ENCODE measurements at regions of chr19 and their contacts with region 1.

Region 1: GRCh38 chr19:55467236-55468053 is 2.9 kb upstream of the C19orf85 start:
- DNase-seq: peak; percentile 73
- H3K4me3 Mint-ChIP-seq: no peak overlapping the region
- H3K27ac Mint-ChIP-seq: no peak overlapping the region
- H3K4me1 Mint-ChIP-seq: peaks cover 3% of the 10 kb centered on the region
- H3K27me3 Mint-ChIP-seq: no peaks in the 10 kb centered on the region

Region 2: GRCh38 chr19:55141696-55142095 is 325.7 kb before region 1 on chr19:
- CTCF ChIA-PET with region 1: interaction called, 11 read pairs
- POLR2A ChIA-PET with region 1: no interaction called
- intact Hi-C with region 1: no loop called
- DNase-seq: no peak
- H3K4me3 Mint-ChIP-seq: no peak overlapping the region
- H3K27ac Mint-ChIP-seq: no peak overlapping the region
- H3K4me1 Mint-ChIP-seq: peaks cover 3% of the 10 kb centered on the region
- H3K27me3 Mint-ChIP-seq: peaks cover 45% of the 10 kb centered on the region

Region 3: GRCh38 chr19:55452749-55453346 is 14.6 kb before region 1 on chr19:
- CTCF ChIA-PET with region 1: interaction called, 12 read pairs
- POLR2A ChIA-PET with region 1: no interaction called
- intact Hi-C with region 1: no loop called
- DNase-seq: peak; percentile 52
- H3K4me3 Mint-ChIP-seq: no peak overlapping the region
- H3K27ac Mint-ChIP-seq: no peak overlapping the region
- H3K4me1 Mint-ChIP-seq: peaks cover 7% of the 10 kb centered on the region
- H3K27me3 Mint-ChIP-seq: peaks cover 22% of the 10 kb centered on the region

Region 4: DNA sequence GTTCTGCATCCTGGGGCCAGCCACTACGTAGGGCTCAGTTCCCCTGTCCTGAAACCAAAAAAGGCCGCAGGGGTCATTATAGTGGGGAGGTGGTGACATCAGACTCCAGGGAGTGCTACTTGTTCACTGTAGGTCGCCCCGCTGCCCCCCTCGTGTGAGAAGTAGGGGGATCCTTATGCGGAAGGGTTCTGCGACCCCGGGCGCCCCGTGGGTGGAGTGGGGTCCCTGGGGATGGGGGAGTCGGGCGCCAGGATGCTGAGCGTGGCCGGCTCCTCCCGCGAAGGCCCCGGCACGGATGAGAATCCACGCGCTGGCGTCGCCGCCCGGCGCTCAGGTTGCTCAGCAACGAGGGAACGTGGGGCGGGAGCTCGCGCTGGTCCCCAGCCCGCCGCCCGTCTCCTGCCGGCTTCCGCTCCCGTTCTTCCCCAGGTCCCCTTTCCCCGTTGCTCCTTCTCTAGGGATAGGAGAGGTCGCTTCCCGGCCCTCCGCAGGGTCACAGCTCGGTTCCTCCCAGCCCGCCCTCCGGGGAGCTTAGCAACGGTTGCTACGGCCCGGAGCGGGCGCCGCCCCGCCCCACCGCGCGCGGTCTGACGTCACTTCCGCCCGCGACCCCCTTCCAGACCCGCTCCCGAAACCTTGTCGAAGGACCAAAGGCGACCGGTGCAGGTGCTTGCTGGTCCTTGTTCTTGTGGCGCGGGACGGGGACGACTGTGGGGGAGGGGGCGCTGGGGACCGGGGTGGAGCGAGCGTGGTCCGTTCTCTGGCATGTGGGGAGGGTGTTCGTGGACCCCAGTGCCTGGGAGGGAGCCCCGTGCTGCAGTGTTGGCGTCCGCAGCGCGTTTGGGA is 17.4 kb after region 1 on chr19 and contains the start of gene NAT14:
- CTCF ChIA-PET with region 1: interaction called, 12 read pairs
- POLR2A ChIA-PET with region 1: no interaction called
- intact Hi-C with region 1: no loop called
- DNase-seq: peak; percentile 67
- H3K4me3 Mint-ChIP-seq: peak within 1 kb of the TSS; percentile 71
- H3K27ac Mint-ChIP-seq: no peak within 1 kb of the TSS
- H3K4me1 Mint-ChIP-seq: peaks cover 17% of the 10 kb centered on the region
- H3K27me3 Mint-ChIP-seq: no peaks in the 10 kb centered on the region
- total RNA-seq, gene NAT14: 8.5 to 12.9 TPM